Activated B cell treated with CpG ODN at 0.5 μM for 24 hours (primary cell): ENCODE measurements at regions of chr22 and their contacts with region 1.

Region 1: DNA sequence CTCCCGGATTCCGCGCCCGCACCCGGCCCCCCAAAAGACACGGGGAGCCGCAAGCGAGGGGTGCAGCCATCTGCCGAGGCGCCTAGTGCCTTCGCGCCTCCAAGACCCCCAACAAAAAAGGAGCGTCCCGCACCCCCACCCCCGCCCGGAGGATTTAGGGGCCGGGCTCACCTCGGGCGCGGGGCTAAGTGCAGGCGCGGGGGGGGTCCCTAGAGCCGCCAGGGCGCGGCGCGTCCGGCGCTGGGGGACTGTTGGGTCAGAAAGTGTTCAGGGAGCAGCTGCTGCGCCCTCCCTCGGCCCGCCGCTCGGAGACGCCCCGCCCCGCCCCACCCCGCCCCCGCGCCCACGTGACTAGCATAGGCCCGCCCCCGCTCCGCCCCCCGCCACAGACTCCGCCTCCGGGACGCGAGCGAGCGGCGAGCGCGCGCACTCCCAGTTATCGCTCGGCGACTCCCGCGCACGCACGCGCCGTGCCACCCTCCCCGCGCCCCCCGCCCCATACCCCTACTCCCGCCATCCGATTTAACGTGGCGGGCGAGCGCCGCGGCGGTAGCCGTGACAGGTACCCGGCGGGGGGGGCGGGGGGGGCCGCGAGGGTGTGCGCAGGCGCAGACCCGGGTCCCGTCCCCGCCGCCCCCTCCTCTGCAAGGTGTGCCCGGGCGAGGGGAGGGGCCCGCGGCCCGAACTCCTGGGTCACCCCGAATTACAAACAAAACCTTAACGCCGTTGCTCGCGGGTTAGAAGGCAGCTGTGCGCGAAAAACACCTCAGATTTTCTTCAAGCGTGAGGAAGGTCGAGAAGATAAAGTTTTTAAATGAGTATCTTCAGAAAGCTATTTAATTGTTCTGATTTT is 56.2 kb downstream of the KCNJ4 start:
- DNase-seq: peak; percentile 79
- ATAC-seq: peak; percentile 73
- H3K4me3 Mint-ChIP-seq: peak overlapping the region; percentile 82
- H3K27ac Mint-ChIP-seq: peak overlapping the region; percentile 84
- H3K4me1 Mint-ChIP-seq: peaks cover 37% of the 10 kb centered on the region
- H3K27me3 Mint-ChIP-seq: no peaks in the 10 kb centered on the region
- CTCF ChIP-seq: no peak

Region 2: DNA sequence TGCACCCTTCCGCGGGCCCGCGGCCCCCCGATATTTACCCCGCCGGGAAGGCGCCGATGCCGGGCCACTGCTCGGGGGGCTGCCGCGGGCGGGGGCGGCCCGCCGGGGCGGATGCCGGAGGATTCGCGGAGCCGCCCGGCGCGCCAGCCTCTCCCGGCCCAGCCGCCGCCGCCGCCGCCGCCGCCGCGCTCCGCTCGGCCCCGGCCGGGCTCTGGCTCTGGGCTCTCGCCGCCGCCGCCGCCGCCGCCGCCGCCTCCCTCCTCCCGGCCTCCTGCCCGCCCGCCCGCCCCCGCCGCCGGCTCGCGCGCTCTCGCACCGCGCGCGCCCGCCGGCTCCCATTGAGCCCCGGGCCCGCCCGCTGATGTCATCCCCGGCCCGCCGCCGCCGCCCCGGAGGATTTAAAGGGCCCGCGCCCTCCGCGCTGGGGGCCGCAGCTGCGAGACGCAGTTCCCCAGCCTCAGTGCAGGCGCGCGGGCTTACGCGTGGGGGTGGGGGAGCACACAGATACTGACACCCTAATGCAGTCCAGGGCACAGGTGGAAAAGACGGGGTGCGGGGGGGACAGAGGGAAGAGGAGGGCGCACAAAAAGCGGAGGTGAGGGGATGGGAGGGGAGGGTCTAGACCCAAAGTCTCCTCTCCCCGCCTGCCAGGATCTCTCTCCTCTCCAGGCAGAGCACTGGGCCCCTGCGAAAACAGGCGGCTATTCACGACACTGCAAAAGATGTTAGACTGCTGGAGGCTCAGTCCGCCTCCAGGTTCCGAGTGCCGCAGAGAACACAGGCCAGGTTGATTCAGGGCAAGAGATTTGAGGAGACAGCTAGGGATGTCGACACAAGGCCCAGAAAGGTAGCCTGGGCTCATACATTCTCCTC is 81.5 kb before region 1 on chr22 and contains the start of gene CSNK1E:
- CTCF ChIA-PET with region 1: no interaction called
- POLR2A ChIA-PET with region 1: interaction called, 7 read pairs
- intact Hi-C with region 1: loop called (anchors 5 kb)
- DNase-seq: peak; percentile 72
- ATAC-seq: peak; percentile 58
- H3K4me3 Mint-ChIP-seq: peak within 1 kb of the TSS; percentile 82
- H3K27ac Mint-ChIP-seq: peak within 1 kb of the TSS; percentile 88
- H3K4me1 Mint-ChIP-seq: peaks cover 50% of the 10 kb centered on the region
- H3K27me3 Mint-ChIP-seq: no peaks in the 10 kb centered on the region
- CTCF ChIP-seq: no peak
- total RNA-seq, gene CSNK1E: 80.6 and 85.2 TPM in 2 replicates

Region 3: DNA sequence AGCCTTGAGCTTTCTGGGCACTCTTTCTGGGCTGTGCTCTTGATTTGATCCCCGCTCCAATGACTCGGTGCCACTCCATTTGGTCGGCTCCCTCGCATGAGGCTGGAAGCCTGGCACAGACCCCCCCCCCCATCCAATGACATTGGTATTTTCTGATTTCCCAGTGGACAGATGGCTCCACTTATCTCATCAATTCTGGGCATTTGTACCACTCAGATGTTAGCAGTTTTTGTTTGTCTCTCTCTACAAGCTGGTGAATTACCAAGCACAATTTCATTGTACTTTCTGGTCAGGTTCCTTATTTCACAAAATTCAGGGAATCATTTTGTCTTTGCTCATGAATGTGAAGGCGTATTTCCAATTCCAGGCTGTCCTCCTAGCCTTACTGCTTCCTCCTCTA is 386.0 kb after region 1 on chr22:
- CTCF ChIA-PET with region 1: no interaction called
- POLR2A ChIA-PET with region 1: interaction called, 11 read pairs
- intact Hi-C with region 1: no loop called
- DNase-seq: no peak
- ATAC-seq: no peak
- H3K4me3 Mint-ChIP-seq: no peak overlapping the region
- H3K27ac Mint-ChIP-seq: no peak overlapping the region
- H3K4me1 Mint-ChIP-seq: no peaks in the 10 kb centered on the region
- H3K27me3 Mint-ChIP-seq: no peaks in the 10 kb centered on the region
- CTCF ChIP-seq: no peak